GM10248 (cell line): ENCODE measurements at regions of chr12 and their contacts with region 1.

Region 1: DNA sequence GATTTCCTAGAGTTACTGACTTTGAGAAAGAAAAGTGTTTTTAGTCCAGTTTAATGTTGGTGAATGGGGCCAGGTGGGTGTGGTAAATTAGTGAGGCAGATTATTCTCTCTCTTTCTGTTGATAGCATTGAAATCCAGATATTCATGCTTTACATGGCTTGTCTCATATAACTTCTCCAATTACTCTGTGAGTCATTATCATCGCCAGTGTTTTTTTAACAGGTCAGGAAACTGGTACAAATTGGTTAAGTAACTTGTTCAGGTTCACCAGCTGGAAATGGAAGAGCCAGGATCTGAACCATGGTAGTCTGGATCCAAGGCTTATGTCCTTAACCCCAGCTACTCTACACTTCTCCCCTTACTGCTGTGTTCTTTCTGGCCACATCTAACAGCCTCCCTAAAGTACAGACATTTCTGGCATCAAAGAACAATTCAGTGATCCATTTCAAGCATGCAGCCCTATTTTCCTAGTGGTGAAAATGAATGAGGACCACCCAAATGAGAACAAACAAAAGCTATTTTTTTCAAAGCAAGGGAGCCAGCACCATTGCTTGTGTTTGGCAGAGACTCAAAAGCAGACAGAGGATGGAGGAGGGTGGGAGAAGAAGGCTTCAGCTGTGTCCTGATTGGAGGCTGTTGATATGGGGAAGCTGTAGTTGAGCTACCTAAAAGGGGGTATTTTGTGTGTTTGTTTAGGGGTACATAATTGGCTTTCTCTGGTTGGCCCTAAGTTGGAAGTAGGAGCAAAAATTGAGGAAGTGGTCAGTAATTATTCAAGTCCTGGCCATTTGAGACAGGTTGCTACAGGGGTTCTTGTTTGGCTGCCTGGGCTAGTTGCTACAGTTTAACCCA is 1.7 kb downstream of the IRAK3 start:
- DNase-seq: no peak
- CTCF ChIP-seq: no peak

Region 2: GRCh38 chr12:66176105-66176900 is 14.4 kb before region 1 on chr12:
- CTCF ChIA-PET with region 1: interaction called, 11 read pairs
- POLR2A ChIA-PET with region 1: no interaction called
- DNase-seq: no peak
- CTCF ChIP-seq: no peak